MCF 10A (cell line): ENCODE measurements at regions of chr16 and their contacts with region 1.

Region 1: GRCh38 chr16:11016993-11017392 is 72.6 kb downstream of the CLEC16A start:
- DNase-seq: peak; percentile 88
- H3K4me3 Mint-ChIP-seq: peak overlapping the region; percentile 42
- H3K27ac Mint-ChIP-seq: peak overlapping the region; percentile 92
- H3K4me1 Mint-ChIP-seq: peaks cover 33% of the 10 kb centered on the region
- H3K27me3 Mint-ChIP-seq: no peaks in the 10 kb centered on the region
- CTCF ChIP-seq: no peak

Region 2: DNA sequence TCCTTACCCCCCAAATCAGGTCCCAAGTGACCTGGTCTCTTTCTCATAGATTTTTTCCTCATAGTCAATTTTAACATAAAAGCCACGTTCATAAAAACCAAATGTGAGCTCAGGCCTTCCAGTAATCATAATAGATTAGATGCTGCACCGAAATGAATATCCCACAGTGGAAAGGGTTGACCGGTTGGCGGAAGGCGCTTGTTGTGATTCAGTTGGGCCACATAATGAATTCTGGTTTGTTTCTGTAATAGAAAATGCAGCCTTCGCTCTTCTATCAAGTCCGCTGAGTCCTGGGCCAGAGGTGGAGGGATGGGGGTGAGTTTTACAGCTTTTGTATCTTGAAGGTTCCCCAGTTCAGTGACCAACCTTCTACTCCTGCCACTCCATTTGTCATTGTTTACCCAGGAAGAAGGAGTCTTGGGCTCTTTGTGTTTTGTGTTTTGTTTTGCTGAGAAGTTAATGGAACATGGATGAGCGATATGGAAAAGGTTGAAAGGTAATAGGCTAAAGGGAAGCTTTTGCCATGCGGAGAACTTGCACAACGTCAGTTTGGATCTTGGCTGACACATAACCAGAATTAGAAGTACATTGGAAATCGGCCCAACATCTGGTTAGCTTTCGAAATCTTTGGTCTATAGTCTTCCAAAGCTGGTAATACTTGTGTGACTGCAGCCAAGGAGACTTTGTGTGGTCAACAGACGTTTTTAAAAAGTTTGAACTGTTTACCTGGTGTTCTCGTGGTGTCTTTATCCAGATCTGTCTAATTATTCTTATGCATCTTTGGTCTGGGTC is 16.8 kb after region 1 on chr16:
- CTCF ChIA-PET with region 1: interaction called, 7 read pairs
- POLR2A ChIA-PET with region 1: interaction called, 20 read pairs
- intact Hi-C with region 1: no loop called
- DNase-seq: peak; percentile 84
- H3K4me3 Mint-ChIP-seq: peak overlapping the region; percentile 48
- H3K27ac Mint-ChIP-seq: peak overlapping the region; percentile 67
- H3K4me1 Mint-ChIP-seq: peaks cover 55% of the 10 kb centered on the region
- H3K27me3 Mint-ChIP-seq: no peaks in the 10 kb centered on the region
- CTCF ChIP-seq: no peak